ENCODE measurements at regions of chr6 and their contacts with region 1.

Region 1: DNA sequence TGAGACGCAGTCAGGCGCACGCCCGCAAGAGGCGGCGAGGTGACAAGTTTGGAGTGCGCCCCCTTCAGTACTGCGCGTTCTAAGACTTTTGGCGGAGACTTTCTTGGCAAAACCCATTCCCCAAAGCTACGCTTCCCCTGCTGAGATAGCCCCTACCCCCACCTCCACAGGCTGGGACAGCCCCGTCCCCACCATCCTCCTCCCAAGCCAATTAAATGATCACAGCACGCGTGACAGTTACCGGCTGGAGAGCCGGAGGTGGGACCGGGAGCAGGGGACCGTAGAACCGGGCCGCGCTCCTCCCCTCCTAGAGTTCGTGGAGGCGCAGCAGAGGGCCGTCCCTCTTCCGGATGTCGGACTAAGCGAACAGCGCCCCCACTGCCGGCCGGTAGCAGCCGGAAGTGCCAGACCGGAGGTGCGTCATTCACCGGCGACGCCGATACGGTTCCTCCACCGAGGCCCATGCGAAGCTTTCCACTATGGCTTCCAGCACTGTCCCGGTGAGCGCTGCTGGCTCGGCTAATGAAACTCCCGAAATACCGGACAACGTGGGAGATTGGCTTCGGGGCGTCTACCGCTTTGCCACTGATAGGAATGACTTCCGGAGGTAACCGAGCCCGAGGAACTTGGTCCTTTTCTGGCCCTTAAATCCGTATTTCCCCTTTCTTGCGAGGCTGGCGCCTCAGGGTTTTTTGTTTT is at the start of gene TOMM6:
- DNase-seq: peak; percentile 95 to 96
- H3K4me3 ChIP-seq: peak within 1 kb of the TSS; percentile 72 to 93 (median 80)
- H3K27ac ChIP-seq: peak within 1 kb of the TSS; percentile 73 to 90 (median 87)
- H3K4me1 ChIP-seq: peaks cover 7 to 20% of the 10 kb centered on the region in 2 donors
- H3K27me3 ChIP-seq: no peaks in the 10 kb centered on the region
- CTCF ChIP-seq: peak; percentile 68 to 96 (median 92)
- POLR2A ChIP-seq: peak; percentile 41 to 93
- total RNA-seq, gene TOMM6: 96.3 to 134 (median 124) TPM

Region 2: GRCh38 chr6:41602864-41603608 is 184.3 kb before region 1 on chr6:
- intact Hi-C with region 1: loop called (anchors 5 kb)
- DNase-seq: peak; percentile 77 to 85
- H3K4me3 ChIP-seq: no peak overlapping the region
- H3K27ac ChIP-seq: no peak overlapping the region
- H3K4me1 ChIP-seq: peaks cover 0 to 11% of the 10 kb centered on the region in 2 donors
- H3K27me3 ChIP-seq: no peaks in the 10 kb centered on the region
- CTCF ChIP-seq: peak; percentile 54 to 90 (median 82)
- POLR2A ChIP-seq: no peak

Region 3: DNA sequence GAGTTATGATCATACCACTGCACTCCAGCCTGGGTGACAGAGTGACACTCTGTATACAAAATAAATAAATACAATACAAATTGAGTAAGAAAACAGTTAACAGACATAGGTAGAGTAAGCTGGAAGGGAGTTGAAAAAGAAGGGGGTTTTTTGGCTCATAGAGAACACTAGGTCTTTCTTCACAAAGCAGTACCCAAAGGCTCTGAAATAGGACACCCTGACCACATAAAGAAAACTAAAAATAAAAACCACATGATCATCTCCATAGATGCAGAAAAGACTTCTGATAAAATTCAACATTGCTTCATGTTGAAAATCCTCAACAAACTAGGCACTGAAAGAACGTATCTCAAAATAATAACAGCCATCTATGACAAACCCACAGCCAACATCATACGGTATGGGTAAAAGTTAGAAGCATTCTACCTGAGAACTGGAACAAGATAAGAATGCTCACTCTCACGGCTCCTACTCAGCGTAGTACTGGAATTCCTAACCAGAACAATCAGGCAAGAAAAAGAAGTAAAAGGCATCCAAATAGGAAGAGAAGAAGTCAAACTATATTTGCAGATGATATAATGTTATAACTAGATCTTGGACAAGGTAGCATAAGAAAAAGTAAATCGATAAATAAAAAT is 48.8 kb after region 1 on chr6:
- intact Hi-C with region 1: no loop called
- DNase-seq: no peak
- H3K4me3 ChIP-seq: no peak overlapping the region
- H3K27ac ChIP-seq: no peak overlapping the region
- H3K4me1 ChIP-seq: no peaks in the 10 kb centered on the region
- H3K27me3 ChIP-seq: no peaks in the 10 kb centered on the region
- CTCF ChIP-seq: no peak
- POLR2A ChIP-seq: no peak

Region 4: GRCh38 chr6:41920921-41921711 is 133.7 kb after region 1 on chr6 and contains the starts of genes BYSL and MED20:
- intact Hi-C with region 1: loop called (anchors 5 kb)
- DNase-seq: peak; percentile 92 to 93
- H3K4me3 ChIP-seq: peak within 1 kb of the TSS; percentile 13 to 85 (median 70)
- H3K27ac ChIP-seq: peak within 1 kb of the TSS; percentile 95 to 97 (median 96)
- H3K4me1 ChIP-seq: peaks cover 14 to 23% of the 10 kb centered on the region in 2 donors
- H3K27me3 ChIP-seq: no peaks in the 10 kb centered on the region
- CTCF ChIP-seq: peak; percentile 87 to 98 (median 97)
- POLR2A ChIP-seq: peak in 1 of 2 donors; percentile 72
- total RNA-seq, gene BYSL: 2.8 to 6.1 (median 4.2) TPM
- total RNA-seq, gene MED20: 20.6 to 27.1 (median 24.3) TPM

Region 5: DNA sequence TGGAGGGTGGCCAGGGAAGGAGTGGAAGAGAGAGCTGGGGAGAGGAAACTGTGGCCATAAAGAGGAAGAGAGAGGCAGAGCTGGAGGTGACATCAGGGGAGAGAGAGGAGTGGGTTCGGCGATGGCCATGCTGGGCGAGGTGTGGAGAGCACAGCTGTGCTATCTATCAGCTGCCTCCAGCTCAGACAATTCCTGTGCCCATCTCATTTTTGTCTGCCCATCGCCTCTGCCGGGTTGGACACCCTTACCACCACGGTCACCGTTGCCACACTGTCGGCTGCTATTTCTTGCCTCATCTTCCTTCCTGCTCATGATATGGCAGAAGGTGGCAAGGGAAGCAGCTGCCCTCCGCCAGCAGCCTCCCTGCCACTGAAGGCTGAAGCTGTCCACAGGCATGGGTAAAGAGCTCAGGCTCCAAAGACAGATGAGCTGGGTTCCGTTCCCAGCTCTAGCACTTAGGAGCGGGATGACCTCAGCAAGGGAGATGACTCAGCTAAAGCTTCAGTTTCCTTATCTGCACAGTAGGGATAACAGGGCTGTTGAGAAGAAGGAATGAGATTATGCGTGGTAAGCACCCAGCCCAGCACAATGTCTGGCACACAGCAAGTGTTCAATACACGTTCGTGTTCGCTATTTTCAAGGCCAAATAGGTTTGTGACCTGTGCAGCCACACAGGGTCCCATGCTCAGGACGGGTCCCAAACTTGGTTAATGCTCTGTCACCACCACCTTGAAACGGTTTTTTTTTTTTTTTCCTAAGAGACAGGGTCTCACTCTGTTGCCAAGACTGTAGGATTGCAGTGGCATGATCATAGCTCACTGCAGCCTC is 241.1 kb after region 1 on chr6:
- intact Hi-C with region 1: no loop called
- DNase-seq: no peak
- H3K4me3 ChIP-seq: no peak overlapping the region
- H3K27ac ChIP-seq: peak overlapping the region in 1 of 3 donors; percentile 95
- H3K4me1 ChIP-seq: peaks cover 42 to 48% of the 10 kb centered on the region in 2 donors
- H3K27me3 ChIP-seq: no peaks in the 10 kb centered on the region
- CTCF ChIP-seq: no peak
- POLR2A ChIP-seq: no peak

Region 6: DNA sequence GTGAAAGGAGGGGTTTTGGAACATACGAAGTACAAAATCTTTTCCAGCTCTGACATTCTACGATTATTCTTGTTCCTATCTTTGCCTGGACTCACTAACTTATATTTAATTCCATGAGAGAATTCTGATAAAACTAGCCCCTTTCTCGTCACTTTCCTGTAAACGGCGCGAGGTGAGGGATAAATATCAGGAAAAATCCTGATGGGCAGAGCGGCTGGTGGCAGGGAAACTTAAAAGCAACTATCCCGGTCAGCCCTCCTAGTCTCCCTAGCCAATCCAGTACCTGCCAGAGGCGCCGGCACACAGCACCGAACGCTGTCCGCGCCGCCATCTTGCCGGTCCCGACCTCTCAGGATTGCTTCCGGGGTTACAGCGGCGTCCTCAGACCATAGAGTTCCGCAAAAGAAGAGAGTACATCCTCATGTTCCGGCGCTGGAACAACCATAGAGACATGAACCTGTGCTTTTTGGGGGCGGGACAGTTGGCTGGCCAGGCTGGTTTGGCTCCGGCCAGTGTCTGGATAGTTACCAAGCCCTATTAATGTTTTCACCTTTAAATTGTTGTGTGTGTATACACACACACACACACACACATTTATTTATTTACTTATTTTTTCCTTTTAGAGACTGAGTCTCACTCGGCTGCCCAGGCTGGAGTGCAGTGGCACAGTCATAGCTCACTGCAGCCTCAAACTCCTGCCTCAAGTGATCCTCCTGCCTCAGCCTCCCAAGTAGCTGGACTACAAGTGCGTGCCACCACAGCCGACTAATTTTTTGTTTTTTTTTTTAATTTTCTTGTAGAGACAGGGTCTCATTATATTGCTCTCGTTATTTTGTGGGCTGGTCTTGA is 430.4 kb after region 1 on chr6 and contains the start of gene MRPS10:
- intact Hi-C with region 1: loop called (anchors 10 kb)
- DNase-seq: peak; percentile 95
- H3K4me3 ChIP-seq: peak within 1 kb of the TSS; percentile 14 to 69 (median 68)
- H3K27ac ChIP-seq: peak within 1 kb of the TSS in 2 of 3 donors; percentile 59 to 74
- H3K4me1 ChIP-seq: peaks cover 7 to 15% of the 10 kb centered on the region in 2 donors
- H3K27me3 ChIP-seq: no peaks in the 10 kb centered on the region
- CTCF ChIP-seq: peak in 1 of 6 experiments; percentile 38
- POLR2A ChIP-seq: peak in 1 of 2 donors; percentile 77
- total RNA-seq, gene MRPS10: 35.2 to 42.5 (median 36.9) TPM